Prostate gland (tissue), 2 donors: ENCODE measurements at regions of chr4 and their contacts with region 1.

Region 1: DNA sequence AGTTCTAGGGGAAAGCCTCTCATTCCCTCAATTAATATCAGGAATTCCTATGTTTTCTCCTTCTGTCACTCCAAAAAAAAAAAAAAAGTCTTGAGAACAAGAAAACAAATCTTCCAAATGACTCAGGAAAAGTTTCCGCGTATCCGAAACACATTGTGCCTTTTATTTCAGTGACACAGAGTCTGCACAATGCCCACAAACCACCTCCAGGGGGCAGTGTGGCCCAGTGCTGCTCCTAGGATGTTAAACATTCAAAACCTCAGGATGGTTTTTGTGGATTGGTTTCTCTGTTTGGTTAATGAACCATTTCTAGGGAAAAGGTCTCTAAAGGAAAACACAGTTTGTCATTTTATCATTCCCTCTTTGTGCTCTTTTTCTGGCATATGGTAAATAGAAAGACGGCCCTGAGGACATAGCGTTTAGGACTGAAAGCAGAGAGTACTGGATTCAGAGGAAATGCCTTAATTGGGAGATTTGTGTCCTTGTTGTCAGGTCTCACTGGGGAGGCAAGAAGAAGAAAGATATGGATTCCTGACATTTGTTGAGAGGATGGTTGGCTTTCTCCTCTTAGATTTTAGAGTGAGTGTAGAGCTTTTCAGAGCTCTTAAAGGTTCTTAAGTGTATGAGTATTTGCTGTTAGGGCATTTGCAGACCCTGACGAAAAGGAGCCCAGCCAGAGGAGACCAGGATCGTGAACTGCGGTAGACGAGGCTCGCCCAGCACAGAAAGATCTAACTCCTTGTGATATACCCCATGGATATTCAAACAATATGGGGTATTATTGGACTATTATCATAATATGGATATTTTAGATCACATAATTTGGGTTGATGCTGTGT is 65.7 kb upstream of the MAP9 start:
- DNase-seq: peak; percentile 81
- H3K4me3 ChIP-seq: no peak overlapping the region
- H3K27ac ChIP-seq: peak overlapping the region; percentile 9 to 43
- H3K4me1 ChIP-seq: no peaks in the 10 kb centered on the region
- H3K27me3 ChIP-seq: no peaks in the 10 kb centered on the region
- CTCF ChIP-seq: peak; percentile 83 to 96 (median 92)
- POLR2A ChIP-seq: no peak

Region 2: DNA sequence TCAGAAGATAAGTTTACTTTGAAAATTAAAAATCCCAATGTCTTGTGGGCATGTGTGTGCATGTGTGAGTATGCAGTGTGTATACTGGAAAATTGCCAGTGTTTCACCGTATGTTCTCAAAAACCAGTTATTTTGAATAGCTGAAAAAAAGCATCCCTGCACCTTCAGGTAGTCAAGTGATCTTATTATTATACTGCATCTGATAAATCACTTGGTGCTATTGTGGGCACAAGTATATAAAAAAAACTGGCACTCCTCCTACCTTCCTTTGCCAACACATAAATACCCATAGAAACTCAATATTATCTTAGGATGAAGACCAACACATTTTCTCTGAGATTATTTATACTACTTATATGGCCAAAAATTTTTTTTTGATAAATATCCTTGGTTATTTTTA is 25.8 kb after region 1 on chr4:
- intact Hi-C with region 1: no loop called
- DNase-seq: no peak
- H3K4me3 ChIP-seq: no peak overlapping the region
- H3K27ac ChIP-seq: no peak overlapping the region
- H3K4me1 ChIP-seq: peaks cover 4% of the 10 kb centered on the region
- H3K27me3 ChIP-seq: no peaks in the 10 kb centered on the region
- CTCF ChIP-seq: no peak
- POLR2A ChIP-seq: no peak

Region 3: GRCh38 chr4:155529272-155529671 is 86.8 kb after region 1 on chr4:
- intact Hi-C with region 1: loop called (anchors 10 kb)
- DNase-seq: no peak
- H3K4me3 ChIP-seq: no peak overlapping the region
- H3K27ac ChIP-seq: no peak overlapping the region
- H3K4me1 ChIP-seq: no peaks in the 10 kb centered on the region
- H3K27me3 ChIP-seq: no peaks in the 10 kb centered on the region
- CTCF ChIP-seq: no peak
- POLR2A ChIP-seq: no peak

Region 4: GRCh38 chr4:155667568-155668511 is 225.4 kb after region 1 on chr4:
- intact Hi-C with region 1: loop called (anchors 5 kb)
- DNase-seq: peak; percentile 48
- H3K4me3 ChIP-seq: peak overlapping the region; percentile 65 to 72
- H3K27ac ChIP-seq: peak overlapping the region; percentile 94 to 97
- H3K4me1 ChIP-seq: no peaks in the 10 kb centered on the region
- H3K27me3 ChIP-seq: no peaks in the 10 kb centered on the region
- CTCF ChIP-seq: no peak
- POLR2A ChIP-seq: no peak

Region 5: GRCh38 chr4:155693015-155693663 is 250.7 kb after region 1 on chr4:
- intact Hi-C with region 1: loop called (anchors 10 kb)
- DNase-seq: peak; percentile 76
- H3K4me3 ChIP-seq: no peak overlapping the region
- H3K27ac ChIP-seq: peak overlapping the region; percentile 24 to 65
- H3K4me1 ChIP-seq: peaks cover 16% of the 10 kb centered on the region
- H3K27me3 ChIP-seq: no peaks in the 10 kb centered on the region
- CTCF ChIP-seq: no peak
- POLR2A ChIP-seq: no peak

Region 6: GRCh38 chr4:155787113-155787710 is 344.7 kb after region 1 on chr4:
- intact Hi-C with region 1: loop called (anchors 5 kb)
- DNase-seq: peak; percentile 28
- H3K4me3 ChIP-seq: no peak overlapping the region
- H3K27ac ChIP-seq: no peak overlapping the region
- H3K4me1 ChIP-seq: no peaks in the 10 kb centered on the region
- H3K27me3 ChIP-seq: no peaks in the 10 kb centered on the region
- CTCF ChIP-seq: peak; percentile 32 to 86 (median 60)
- POLR2A ChIP-seq: no peak

Region 7: GRCh38 chr4:155953151-155954114 is 510.9 kb after region 1 on chr4 and contains the start of gene CTSO:
- intact Hi-C with region 1: loop called (anchors 5 kb)
- DNase-seq: peak; percentile 68
- H3K4me3 ChIP-seq: peak within 1 kb of the TSS; percentile 86 to 92
- H3K27ac ChIP-seq: peak within 1 kb of the TSS; percentile 99
- H3K4me1 ChIP-seq: no peaks in the 10 kb centered on the region
- H3K27me3 ChIP-seq: no peaks in the 10 kb centered on the region
- CTCF ChIP-seq: peak; percentile 37 to 67 (median 57)
- POLR2A ChIP-seq: peak; percentile 34
- total RNA-seq, gene CTSO: 24.9 to 37.5 TPM